WTC11 (cell line): ENCODE measurements at regions of chr5 and their contacts with region 1.

Region 1: DNA sequence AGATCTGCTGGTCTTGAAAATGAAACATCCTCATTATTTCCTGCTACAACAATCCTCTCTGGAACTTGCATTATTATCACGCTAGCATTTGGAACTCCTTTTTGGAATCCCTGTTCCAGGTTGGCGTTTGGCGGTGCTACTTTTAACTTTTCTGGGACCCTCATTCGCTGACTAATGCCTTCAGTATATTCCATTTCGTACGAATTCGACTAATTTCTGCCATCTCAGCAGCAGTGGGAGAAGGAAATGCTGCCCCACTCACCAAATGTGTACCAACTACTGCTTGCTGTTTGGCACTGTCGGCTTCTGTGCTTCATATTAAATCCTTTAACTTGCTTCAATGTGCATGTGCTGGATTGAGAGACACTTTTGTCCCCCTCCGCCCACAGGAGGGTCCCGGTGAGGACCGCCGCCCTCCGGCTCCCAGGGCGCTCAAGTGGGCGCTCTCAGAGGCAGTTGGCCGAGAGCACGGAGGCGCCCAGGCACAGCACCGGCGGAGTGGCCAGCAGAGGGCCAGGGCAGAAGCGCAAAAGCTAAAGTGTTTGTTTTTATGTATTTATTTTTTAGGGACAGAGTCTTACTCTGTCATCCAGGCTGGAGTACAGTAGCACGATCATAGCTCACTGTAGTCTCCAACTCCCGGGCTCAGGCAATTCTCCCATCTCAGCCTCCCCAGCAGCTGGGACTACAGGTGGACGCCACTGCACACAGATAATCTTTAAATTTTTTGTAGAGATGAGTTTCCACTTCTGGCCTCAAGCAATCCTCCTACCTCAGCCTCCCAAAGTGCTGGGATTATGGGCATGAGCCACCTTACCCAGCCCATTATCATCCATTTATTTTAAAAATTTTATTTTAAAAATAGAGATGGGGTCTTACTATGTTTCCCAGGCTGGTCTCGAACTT is 11.9 kb downstream of the PDE6A start:
- DNase-seq: peak; percentile 49
- ATAC-seq: peak; percentile 97
- H3K4me3 Mint-ChIP-seq: no peak overlapping the region
- H3K27ac Mint-ChIP-seq: no peak overlapping the region
- H3K4me1 Mint-ChIP-seq: no peaks in the 10 kb centered on the region
- H3K27me3 Mint-ChIP-seq: no peaks in the 10 kb centered on the region
- CTCF ChIP-seq: no peak

Region 2: DNA sequence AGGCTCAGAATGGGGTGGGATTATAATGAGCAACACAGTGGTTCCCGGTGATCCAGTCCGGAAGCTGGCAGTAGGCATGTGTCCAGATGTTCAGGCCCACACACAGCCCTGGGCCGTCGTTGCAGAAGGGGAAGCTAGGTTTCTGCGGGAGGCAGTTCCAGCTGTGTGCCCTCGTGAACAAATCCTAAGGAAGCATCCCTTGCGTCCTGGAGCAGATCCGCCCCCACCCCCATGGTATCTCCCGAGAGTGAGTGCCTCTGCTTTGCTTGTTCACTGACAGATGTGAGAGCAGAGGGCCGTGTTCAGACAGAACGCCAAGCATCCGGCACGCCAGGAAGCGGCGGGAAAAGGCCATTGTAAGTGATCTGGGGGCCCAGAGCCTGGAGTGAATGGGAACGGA is 92.9 kb before region 1 on chr5:
- CTCF ChIA-PET with region 1: no interaction called
- POLR2A ChIA-PET with region 1: no interaction called
- DNase-seq: no peak
- ATAC-seq: no peak
- H3K4me3 Mint-ChIP-seq: no peak overlapping the region
- H3K27ac Mint-ChIP-seq: peak overlapping the region; percentile 16; the same call in 1 of the 2 replicates
- H3K4me1 Mint-ChIP-seq: peaks cover 3% of the 10 kb centered on the region; the same call in 1 of the 2 replicates
- H3K27me3 Mint-ChIP-seq: no peaks in the 10 kb centered on the region
- CTCF ChIP-seq: no peak

Region 3: DNA sequence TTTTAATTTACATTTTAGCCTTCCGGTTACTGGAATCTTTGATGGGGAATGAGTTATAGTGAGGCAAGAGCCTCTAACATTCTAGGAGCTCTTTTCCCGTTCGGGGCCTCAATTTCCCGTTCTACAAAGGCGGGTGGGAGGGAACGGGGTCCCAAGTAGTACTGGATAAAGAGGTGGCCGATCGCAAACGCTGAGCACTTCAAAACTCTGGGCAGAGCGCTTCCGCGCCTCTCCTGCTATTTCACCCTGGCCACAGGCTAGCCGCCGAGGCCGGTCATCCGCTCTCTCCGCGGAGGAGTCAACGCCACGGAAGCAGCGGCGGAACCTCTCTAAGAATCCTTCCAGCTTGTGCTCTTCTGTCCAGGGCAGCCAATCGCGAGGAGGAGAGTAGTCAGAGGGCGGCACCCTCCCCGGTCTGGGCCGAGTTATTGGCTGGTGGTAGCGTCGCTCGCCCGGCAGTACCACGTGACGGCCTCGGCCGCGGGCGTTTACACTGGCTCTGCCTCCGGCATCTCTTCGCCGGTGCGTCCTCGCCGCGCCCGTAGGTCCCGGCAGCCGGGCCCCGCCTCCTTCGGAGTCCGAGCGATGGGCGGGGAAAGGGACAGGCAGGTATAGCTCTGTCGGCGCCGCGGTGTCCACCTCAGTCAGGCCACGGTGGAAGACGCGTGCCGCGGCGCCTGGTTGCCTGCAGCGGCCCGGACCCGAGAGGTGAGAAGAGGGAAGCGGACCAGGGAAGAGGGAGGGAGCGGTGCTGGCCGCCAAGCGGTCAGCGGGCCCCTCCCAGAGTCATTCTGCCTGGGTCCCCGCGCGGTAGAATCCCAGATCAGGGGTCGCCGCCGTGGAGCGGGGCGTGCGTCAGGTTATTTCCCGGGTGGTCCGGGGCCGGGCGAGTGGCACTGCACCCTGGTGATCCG is 27.8 kb after region 1 on chr5 and contains the start of gene SLC26A2:
- CTCF ChIA-PET with region 1: interaction called, 18 read pairs
- POLR2A ChIA-PET with region 1: no interaction called
- DNase-seq: peak; percentile 97
- ATAC-seq: peak; percentile 98
- H3K4me3 Mint-ChIP-seq: peak within 1 kb of the TSS; percentile 79
- H3K27ac Mint-ChIP-seq: peak within 1 kb of the TSS; percentile 99
- H3K4me1 Mint-ChIP-seq: peaks cover 19% of the 10 kb centered on the region
- H3K27me3 Mint-ChIP-seq: peaks cover 8% of the 10 kb centered on the region; the same call in 1 of the 2 replicates
- CTCF ChIP-seq: no peak
- total RNA-seq, gene SLC26A2: 10.8 to 11.1 TPM (median 11.1 TPM) in 3 replicates

Region 4: DNA sequence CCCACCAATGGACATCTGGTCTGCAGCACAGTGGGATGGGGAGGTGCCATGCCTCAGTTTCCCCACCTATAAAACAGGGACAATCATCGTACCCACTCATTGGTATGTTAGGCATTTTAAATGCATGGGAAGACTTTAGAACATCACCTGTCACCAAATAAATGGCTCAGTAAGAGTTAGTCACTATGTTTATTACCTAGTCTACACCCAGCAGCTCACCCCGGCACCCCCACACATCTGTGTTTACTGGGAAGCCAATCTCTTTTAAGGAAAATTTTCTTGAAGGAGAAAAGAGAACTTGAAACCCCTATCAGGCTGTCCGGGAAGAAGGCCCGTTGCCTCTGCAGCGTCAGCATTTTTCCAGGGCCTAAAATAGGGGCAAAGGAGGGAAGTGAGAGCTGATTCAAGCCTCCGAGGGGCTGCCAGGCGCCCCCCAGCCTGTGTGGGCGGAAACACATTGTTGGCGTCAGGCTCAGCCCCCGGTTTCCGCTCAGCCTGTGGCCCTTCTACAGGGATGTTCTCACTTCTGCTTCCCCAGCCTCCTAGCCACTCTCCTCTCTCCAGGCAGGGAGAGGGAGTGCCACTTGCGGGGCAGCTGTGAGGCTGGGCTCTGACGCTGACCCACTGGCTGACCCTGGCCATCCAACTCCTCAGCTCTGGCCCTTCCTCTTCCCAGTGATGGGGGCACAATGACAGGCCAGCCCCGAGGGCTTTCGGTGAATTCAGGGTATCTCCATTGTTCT is 149.0 kb after region 1 on chr5:
- CTCF ChIA-PET with region 1: no interaction called
- POLR2A ChIA-PET with region 1: no interaction called
- DNase-seq: no peak
- ATAC-seq: peak; percentile 79
- H3K4me3 Mint-ChIP-seq: no peak overlapping the region
- H3K27ac Mint-ChIP-seq: no peak overlapping the region
- H3K4me1 Mint-ChIP-seq: peaks cover 17% of the 10 kb centered on the region
- H3K27me3 Mint-ChIP-seq: no peaks in the 10 kb centered on the region
- CTCF ChIP-seq: no peak